ENCODE measurements at regions of chr11 and their contacts with region 1.

Region 1: DNA sequence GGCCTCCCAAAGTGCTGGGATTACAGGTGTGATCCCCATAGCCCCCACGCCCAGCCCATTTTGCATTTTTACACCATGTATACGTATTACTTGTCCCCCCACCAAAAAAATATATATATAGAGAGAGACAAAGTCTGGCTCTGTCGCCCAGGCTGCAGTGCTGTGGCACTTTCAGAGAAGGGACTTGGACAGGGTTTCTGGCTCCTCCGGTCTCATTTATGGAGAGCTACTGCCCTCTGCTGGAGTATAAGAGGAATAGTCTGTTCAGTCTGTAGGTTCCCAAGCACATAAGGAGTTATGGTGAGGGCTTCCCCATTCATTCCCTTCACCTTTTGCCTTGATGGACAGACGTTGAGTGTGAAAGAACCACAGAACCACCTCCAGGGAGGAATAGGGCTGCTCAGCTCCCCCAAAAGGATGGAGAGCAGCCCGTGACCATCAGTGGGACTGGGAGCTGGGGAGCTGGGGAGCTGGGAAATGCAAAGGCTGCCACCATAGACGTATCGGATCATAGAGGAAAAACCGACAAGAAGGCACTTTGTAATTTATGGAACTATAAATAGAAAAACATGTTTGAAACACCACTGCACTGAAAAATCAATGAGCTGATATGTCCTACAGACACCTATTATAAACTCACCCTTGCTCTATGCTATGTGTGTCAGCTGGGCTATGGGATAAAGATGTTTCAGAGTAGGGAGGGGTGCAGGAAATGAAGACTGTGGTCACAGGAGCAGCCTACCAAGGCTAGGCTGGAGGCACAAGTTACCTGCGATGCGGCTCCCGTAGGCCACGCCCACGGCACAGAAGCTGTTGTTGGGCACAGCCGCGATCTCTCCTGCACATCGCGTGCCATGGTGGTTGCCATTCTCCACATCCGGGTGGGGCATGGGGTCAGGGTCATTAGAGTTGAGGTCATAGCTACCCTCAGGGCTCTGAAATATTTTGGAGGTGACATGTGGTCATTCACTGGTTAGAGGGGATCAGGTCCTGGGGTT is 5.2 kb downstream of the PCSK7 start:
- DNase-seq: no peak
- H3K4me3 ChIP-seq: no peak overlapping the region
- H3K27ac ChIP-seq: peak overlapping the region; percentile 23 to 95 (median 94)
- H3K4me1 ChIP-seq: peaks cover 24 to 82% (median 74%) of the 10 kb centered on the region in 4 donors
- H3K27me3 ChIP-seq: no peaks in the 10 kb centered on the region
- CTCF ChIP-seq: peak; percentile 78 to 96 (median 80)
- EP300 ChIP-seq: no peak
- POLR2A ChIP-seq: no peak

Region 2: DNA sequence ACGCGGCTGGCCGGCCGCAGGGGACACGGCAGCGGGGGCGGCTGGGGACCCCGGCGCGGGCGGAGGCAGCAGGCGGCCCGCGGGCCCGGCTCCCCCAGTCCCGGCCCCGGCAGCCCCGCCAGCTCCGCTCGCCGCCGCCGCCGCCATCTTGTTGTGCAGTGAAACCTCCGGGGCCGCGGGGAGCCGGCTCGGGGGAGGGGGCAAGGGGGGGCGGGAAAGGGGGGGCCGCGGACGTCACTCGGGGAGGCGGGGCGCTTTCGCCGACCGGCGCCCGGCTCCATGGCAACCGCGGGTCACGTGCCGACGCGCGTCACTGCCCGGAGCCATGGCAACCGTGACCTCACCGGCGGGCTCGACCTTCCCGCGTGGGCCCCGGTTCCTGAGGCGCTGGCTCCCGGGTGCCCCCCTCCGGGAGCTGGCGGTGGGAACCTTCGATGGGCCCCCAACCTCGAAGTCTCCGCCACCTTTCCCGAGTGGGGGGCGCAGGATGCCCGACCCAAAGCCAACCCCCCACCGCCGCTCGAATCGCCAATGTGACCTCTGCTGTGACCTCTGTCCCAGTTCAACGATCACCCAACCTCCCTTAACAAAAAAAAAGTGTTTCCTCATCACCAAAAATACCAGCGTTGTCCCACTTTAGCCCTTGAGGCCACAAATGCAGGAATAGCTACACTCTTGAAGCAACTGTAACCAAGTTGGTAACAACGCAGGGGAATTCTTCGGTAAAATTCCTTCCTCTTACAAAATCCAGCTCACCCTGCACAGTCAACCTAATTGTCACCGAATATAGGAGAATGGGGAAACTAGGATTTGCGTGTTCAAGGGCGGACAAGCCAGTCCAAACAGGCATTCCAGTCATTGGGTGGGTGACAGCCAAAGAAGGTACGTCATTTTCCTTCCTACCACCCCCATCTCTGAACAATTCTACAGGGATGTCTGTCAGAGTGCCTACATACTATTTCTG is 128.1 kb before region 1 on chr11 and contains the start of gene SIK3:
- intact Hi-C with region 1: loop called (anchors 5 kb)
- DNase-seq: peak; percentile 98
- H3K4me3 ChIP-seq: peak within 1 kb of the TSS; percentile 82 to 92 (median 88)
- H3K27ac ChIP-seq: peak within 1 kb of the TSS; percentile 98 to 99 (median 99)
- H3K4me1 ChIP-seq: peaks cover 32 to 53% (median 48%) of the 10 kb centered on the region in 4 donors
- H3K27me3 ChIP-seq: no peaks in the 10 kb centered on the region
- CTCF ChIP-seq: peak; percentile 47 to 64 (median 57)
- EP300 ChIP-seq: peak; percentile 58
- POLR2A ChIP-seq: peak; percentile 52
- total RNA-seq, gene SIK3: 39.5 to 53.5 (median 42.3) TPM

Region 3: DNA sequence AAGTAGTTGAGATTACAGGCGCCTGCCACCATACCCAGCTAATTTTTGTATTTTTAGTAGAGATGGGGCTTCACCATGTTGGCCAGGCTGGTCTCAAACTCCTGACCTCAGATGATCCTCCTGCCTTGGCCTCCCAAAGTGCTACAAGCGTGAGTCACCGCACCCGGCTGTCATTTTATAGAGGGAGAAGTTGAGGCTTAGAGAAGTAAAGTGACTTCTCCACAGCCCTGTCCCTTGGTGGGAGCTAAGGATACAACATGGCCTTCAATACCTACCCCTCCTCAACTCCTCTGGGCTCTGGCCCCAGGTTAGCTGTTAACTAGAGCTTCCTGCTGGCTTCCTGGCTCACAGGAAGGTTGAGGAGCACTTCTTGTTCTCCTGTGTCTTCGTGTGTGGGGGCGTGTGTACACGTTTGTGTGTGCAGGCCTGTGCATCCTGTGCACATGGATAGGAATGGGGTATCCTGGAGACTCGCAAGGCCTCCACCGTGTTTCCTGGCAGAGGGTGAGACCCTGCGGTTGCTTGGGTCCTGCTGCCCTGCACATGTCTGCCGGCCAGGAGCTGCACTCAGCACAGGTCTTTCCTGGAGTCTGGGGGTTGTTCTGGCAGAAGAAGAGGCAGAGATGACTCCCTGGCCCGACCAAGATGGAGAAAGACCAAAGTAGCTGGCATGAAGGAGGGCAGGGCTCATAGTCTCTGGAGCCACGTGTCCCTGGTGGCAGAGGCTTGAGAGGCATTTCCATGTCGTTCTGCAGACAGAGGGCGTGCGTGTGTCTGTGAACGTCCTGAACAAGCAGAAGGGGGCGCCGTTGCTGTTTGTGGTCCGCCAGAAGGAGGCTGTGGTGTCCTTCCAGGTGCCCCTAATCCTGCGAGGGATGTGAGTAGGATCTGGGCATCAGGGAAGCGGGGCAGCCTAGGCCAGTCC is 45.8 kb before region 1 on chr11:
- intact Hi-C with region 1: loop called (anchors 1 kb)
- DNase-seq: no peak
- H3K4me3 ChIP-seq: peak overlapping the region; percentile 9 to 75 (median 52)
- H3K27ac ChIP-seq: peak overlapping the region; percentile 93 to 96 (median 94)
- H3K4me1 ChIP-seq: peaks cover 31 to 53% (median 45%) of the 10 kb centered on the region in 4 donors
- H3K27me3 ChIP-seq: no peaks in the 10 kb centered on the region
- CTCF ChIP-seq: peak; percentile 74 to 92 (median 79)
- EP300 ChIP-seq: no peak
- POLR2A ChIP-seq: no peak

Region 4: DNA sequence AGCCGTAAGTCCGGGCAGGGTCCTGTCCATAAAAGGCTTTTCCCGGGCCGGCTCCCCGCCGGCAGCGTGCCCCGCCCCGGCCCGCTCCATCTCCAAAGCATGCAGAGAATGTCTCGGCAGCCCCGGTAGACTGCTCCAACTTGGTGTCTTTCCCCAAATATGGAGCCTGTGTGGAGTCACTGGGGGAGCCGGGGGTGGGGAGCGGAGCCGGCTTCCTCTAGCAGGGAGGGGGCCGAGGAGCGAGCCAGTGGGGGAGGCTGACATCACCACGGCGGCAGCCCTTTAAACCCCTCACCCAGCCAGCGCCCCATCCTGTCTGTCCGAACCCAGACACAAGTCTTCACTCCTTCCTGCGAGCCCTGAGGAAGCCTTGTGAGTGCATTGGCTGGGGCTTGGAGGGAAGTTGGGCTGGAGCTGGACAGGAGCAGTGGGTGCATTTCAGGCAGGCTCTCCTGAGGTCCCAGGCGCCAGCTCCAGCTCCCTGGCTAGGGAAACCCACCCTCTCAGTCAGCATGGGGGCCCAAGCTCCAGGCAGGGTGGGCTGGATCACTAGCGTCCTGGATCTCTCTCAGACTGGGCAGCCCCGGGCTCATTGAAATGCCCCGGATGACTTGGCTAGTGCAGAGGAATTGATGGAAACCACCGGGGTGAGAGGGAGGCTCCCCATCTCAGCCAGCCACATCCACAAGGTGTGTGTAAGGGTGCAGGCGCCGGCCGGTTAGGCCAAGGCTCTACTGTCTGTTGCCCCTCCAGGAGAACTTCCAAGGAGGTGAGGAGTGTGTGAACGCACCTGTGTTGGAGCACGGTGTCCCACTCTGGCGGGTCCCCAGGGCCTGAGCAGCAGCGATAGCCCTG is 27.4 kb before region 1 on chr11 and contains the start of gene TAGLN:
- intact Hi-C with region 1: loop called (anchors 2 kb)
- DNase-seq: no peak
- H3K4me3 ChIP-seq: peak within 1 kb of the TSS; percentile 66 to 88 (median 78)
- H3K27ac ChIP-seq: peak within 1 kb of the TSS; percentile 94 to 97 (median 96)
- H3K4me1 ChIP-seq: peaks cover 22 to 58% (median 41%) of the 10 kb centered on the region in 4 donors
- H3K27me3 ChIP-seq: no peaks in the 10 kb centered on the region
- CTCF ChIP-seq: no peak
- EP300 ChIP-seq: no peak
- POLR2A ChIP-seq: peak; percentile 55
- total RNA-seq, gene TAGLN: 12,513 to 19,293 (median 14,679) TPM